CD4-positive, alpha-beta memory T cell (primary cell): ENCODE measurements at regions of chr6 and their contacts with region 1.

Region 1: DNA sequence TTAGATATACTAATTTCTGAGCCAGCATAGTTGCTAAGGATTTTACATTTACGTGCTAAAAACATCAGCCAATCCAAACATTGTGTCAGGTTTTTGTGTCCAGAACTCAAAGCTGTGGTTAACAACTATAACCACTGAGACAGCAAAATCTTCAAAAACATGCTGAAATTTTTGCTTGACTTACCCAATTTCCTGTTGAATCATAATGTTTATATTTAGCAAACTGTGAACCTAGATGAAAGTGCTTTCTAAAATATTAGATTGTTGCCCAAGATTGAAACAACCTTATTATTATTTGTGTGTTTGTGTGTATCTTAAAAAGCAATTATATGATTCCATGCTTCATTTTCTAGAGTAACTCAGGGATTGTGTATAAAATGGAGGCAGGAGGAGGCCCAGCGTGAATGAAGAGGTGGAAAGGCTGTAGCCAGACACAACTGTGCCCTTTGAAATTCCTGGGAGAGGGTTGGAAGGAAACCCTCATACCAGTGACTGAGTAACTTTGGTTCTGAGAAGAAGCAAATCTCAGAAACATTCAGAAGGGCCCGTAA is 48.0 kb downstream of the ARMC2 start:
- DNase-seq: peak; percentile 49 to 65 (median 53)
- H3K4me3 ChIP-seq: peak overlapping the region in 1 of 2 donors; percentile 2
- H3K4me3 Mint-ChIP-seq: peak overlapping the region; percentile 67 to 83 (median 78)
- H3K27ac ChIP-seq: peak overlapping the region; percentile 27
- H3K27ac Mint-ChIP-seq: peak overlapping the region; percentile 74 to 98 (median 94)
- H3K4me1 ChIP-seq: peaks cover 57% of the 10 kb centered on the region
- H3K4me1 Mint-ChIP-seq: peaks cover 25 to 53% (median 38%) of the 10 kb centered on the region in 4 donors
- H3K27me3 ChIP-seq: no peaks in the 10 kb centered on the region
- H3K27me3 Mint-ChIP-seq: no peaks in the 10 kb centered on the region

Region 2: GRCh38 chr6:108541838-108542759 is 354.1 kb before region 1 on chr6:
- CTCF ChIA-PET with region 1: interaction called, 45 read pairs
- POLR2A ChIA-PET with region 1: interaction called, 4 read pairs
- intact Hi-C with region 1: no loop called
- DNase-seq: peak; percentile 71 to 74 (median 73)
- H3K4me3 ChIP-seq: no peak overlapping the region
- H3K4me3 Mint-ChIP-seq: peak overlapping the region in 4 of 8 donors; percentile 16 to 71 (median 56)
- H3K27ac ChIP-seq: no peak overlapping the region
- H3K27ac Mint-ChIP-seq: no peak overlapping the region
- H3K4me1 ChIP-seq: peaks cover 8% of the 10 kb centered on the region
- H3K4me1 Mint-ChIP-seq: peaks cover 6 to 17% (median 8%) of the 10 kb centered on the region in 4 donors
- H3K27me3 ChIP-seq: no peaks in the 10 kb centered on the region
- H3K27me3 Mint-ChIP-seq: peaks cover 4 to 6% of the 10 kb centered on the region in 2 donors

Region 3: DNA sequence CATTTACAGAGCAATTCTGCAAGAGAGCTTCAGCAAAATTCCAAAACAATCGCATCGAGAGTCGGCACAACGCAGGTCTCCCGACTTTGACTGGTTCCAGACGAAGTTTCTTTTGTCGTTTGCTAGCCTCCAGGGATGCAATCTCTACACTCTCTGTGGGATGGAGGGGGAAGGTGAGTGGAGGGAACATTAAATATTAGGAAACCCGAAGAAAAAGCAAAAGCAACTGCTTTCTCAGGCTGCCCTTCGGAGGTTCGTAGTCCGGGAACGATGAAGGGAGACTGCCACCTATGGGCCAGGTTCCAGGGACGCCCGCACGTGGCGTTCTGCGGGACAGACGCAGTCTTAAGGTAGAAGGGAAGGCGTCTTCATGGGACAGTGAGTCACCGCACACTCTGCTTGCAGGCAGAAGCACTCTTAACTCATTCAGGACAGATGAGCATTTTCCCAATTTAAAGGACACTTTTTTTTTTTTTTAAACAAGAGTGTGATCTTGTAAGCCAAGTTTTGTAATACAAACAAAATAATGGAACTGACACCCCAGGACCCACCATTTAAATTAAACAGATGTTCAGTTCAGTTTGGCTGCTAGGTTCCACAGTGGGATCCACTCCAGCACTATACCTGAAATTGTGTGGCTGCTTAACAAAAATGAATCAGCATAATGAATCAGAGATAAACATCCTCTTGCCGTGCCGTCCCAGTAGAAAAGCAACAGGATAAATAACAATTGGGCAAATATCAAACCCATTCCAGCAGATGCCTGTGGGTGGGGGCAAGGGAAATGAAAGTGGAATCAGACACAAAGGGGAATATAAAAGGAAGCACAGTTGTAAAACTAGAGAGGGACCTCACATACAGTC is 113.8 kb before region 1 on chr6:
- CTCF ChIA-PET with region 1: interaction called, 7 read pairs
- POLR2A ChIA-PET with region 1: no interaction called
- intact Hi-C with region 1: loop called (anchors 2 kb)
- DNase-seq: peak; percentile 69 to 74 (median 72)
- H3K4me3 ChIP-seq: peak overlapping the region in 1 of 2 donors; percentile 40
- H3K4me3 Mint-ChIP-seq: peak overlapping the region; percentile 78 to 93 (median 87)
- H3K27ac ChIP-seq: no peak overlapping the region
- H3K27ac Mint-ChIP-seq: peak overlapping the region in 5 of 7 donors; percentile 24 to 78 (median 47)
- H3K4me1 ChIP-seq: peaks cover 5% of the 10 kb centered on the region
- H3K4me1 Mint-ChIP-seq: peaks cover 4 to 11% (median 7%) of the 10 kb centered on the region in 4 donors
- H3K27me3 ChIP-seq: no peaks in the 10 kb centered on the region
- H3K27me3 Mint-ChIP-seq: no peaks in the 10 kb centered on the region

Region 4: GRCh38 chr6:108848116-108848868 is 47.9 kb before region 1 on chr6 and contains the start of gene ARMC2:
- CTCF ChIA-PET with region 1: interaction called, 8 read pairs
- POLR2A ChIA-PET with region 1: interaction called, 4 read pairs
- intact Hi-C with region 1: loop called (anchors 5 kb)
- DNase-seq: peak; percentile 85 to 88 (median 86)
- H3K4me3 ChIP-seq: peak within 1 kb of the TSS; percentile 46 to 78
- H3K4me3 Mint-ChIP-seq: peak within 1 kb of the TSS; percentile 84 to 91 (median 86)
- H3K27ac ChIP-seq: peak within 1 kb of the TSS; percentile 58
- H3K27ac Mint-ChIP-seq: peak within 1 kb of the TSS; percentile 81 to 93 (median 91)
- H3K4me1 ChIP-seq: peaks cover 15% of the 10 kb centered on the region
- H3K4me1 Mint-ChIP-seq: peaks cover 17 to 33% (median 23%) of the 10 kb centered on the region in 4 donors
- H3K27me3 ChIP-seq: no peaks in the 10 kb centered on the region
- H3K27me3 Mint-ChIP-seq: no peaks in the 10 kb centered on the region
- total RNA-seq, gene ARMC2: 10.7 to 11.2 TPM

Region 5: DNA sequence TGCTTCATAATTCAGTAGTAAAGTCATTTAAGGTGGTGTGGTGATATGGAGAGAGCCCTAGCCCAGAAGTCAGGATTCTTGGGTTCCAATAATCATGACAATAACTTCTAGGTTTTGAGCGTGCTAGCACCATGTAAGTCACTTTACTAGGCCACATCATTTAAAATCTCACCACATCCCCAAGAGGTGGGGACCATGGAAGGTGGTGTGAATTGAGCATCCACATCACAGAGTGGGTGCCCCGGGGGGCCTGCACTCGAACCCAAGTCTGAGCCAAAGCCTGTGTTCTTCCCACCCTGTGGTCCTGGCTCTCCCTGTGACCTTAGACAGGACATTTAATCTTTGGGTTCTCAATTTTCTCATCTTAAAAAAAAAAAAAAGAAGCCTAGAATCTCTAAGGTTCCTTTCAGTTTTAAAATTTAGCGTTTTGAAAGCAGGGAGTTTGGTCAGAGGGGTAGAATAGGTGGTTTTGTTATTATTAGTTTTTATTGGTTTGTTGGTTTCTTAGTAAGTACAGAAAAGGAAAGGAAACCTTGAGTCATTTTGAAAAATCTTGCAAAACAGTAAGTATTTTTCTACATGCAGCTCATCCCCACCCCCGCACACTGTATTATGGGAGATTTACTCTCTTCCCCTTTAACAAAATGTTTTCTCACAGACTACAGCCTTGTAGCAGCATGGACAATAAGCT is 21.6 kb before region 1 on chr6:
- CTCF ChIA-PET with region 1: interaction called, 17 read pairs
- POLR2A ChIA-PET with region 1: interaction called, 6 read pairs
- intact Hi-C with region 1: no loop called
- DNase-seq: peak; percentile 22 to 47 (median 29)
- H3K4me3 ChIP-seq: peak overlapping the region in 1 of 2 donors; percentile 16
- H3K4me3 Mint-ChIP-seq: peak overlapping the region; percentile 70 to 90 (median 77)
- H3K27ac ChIP-seq: peak overlapping the region; percentile 52
- H3K27ac Mint-ChIP-seq: peak overlapping the region; percentile 77 to 96 (median 90)
- H3K4me1 ChIP-seq: peaks cover 46% of the 10 kb centered on the region
- H3K4me1 Mint-ChIP-seq: peaks cover 34 to 54% (median 45%) of the 10 kb centered on the region in 4 donors
- H3K27me3 ChIP-seq: no peaks in the 10 kb centered on the region
- H3K27me3 Mint-ChIP-seq: no peaks in the 10 kb centered on the region

Region 6: DNA sequence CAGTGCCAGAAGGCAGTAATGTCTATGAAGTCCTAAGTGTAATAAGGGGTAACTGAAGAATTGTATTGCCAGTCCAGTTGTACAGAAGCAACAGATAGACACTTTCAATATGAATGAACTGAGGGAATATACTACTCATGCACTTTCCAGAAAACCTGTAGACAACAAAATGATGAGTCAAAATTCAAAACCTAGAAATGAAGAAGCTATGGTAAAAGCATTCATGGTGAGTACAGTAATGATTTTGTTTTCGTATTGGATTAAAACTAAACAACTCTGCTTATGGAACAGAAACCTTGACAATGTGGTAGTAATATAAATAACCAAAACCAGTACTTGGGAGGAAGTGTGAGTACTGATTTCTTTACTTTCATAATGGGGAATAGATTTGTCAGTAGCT is 13.0 kb before region 1 on chr6:
- CTCF ChIA-PET with region 1: interaction called, 10 read pairs
- POLR2A ChIA-PET with region 1: no interaction called
- intact Hi-C with region 1: no loop called
- DNase-seq: no peak
- H3K4me3 ChIP-seq: no peak overlapping the region
- H3K4me3 Mint-ChIP-seq: no peak overlapping the region
- H3K27ac ChIP-seq: no peak overlapping the region
- H3K27ac Mint-ChIP-seq: no peak overlapping the region
- H3K4me1 ChIP-seq: no peaks in the 10 kb centered on the region
- H3K4me1 Mint-ChIP-seq: peaks cover 0 to 4% (median 0%) of the 10 kb centered on the region in 4 donors
- H3K27me3 ChIP-seq: no peaks in the 10 kb centered on the region
- H3K27me3 Mint-ChIP-seq: no peaks in the 10 kb centered on the region